HepG2 (cell line): ENCODE measurements at regions of chr14 and their contacts with region 1.

Region 1: DNA sequence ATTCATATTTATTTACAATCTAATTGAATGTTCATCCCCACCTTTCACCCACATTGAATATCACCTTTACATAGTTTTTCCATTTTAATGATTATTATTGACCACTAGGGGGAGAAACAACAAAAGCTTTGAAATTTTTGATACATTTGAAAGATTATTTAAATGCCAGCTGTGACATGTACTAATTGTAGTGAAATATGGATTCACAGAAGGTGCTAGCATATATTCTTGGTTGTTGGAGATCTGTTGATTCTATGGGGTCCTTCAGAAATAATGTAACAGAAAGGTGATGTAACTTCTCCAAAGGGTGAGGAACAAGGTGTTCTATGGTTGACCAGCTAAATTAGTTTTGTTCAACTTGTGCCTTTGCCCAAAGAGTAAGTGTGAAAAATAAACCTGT is 22.4 kb upstream of the GPR33 start:
- DNase-seq: peak; percentile 48
- ATAC-seq: no peak
- H3K4me3 ChIP-seq: no peak overlapping the region
- H3K27ac ChIP-seq: no peak overlapping the region
- H3K4me1 ChIP-seq: 0 out of 2 replicates have a peak, but pooled peaks cover 5% of the 10 kb centered on the region
- H3K27me3 ChIP-seq: peaks cover 0 to 10% of the 10 kb centered on the region in 2 experiments; a peak in 2 of 5 replicates
- CTCF ChIP-seq: peak; percentile 74
- EP300 ChIP-seq: no peak
- POLR2A ChIP-seq: no peak
- RAD21 ChIP-seq: peak; percentile 67

Region 2: GRCh38 chr14:31536201-31536960 is 26.2 kb after region 1 on chr14:
- CTCF ChIA-PET with region 1: no interaction called
- POLR2A ChIA-PET with region 1: no interaction called
- in situ Hi-C with region 1: no loop called
- intact Hi-C with region 1: no loop called
- DNase-seq: no peak
- ATAC-seq: no peak
- H3K4me3 ChIP-seq: no peak overlapping the region
- H3K27ac ChIP-seq: no peak overlapping the region
- H3K4me1 ChIP-seq: no peaks in the 10 kb centered on the region
- H3K27me3 ChIP-seq: no peaks in the 10 kb centered on the region; a peak in 2 of 5 replicates
- CTCF ChIP-seq: no peak
- EP300 ChIP-seq: no peak
- POLR2A ChIP-seq: no peak
- RAD21 ChIP-seq: no peak

Region 3: DNA sequence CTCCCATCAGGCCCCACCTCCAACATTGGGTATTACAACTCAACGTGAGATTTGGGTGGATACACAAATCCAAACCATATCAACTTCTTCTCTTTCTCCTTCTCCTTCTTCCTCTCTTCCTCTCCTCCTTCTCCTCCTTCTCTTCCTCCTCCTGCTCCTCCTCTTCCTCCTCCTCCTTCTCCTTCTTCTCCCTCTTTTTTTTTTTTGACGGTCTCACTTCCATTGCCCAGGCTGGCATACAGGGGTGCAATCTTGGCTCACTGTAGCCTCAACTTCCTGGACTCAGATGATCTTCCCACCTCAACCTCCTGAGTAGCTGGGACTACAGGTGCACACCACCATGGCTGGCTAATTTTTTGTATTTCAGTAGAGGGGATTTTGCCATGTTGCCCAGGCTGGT is 39.6 kb after region 1 on chr14:
- CTCF ChIA-PET with region 1: no interaction called
- POLR2A ChIA-PET with region 1: no interaction called
- in situ Hi-C with region 1: no loop called
- intact Hi-C with region 1: no loop called
- DNase-seq: no peak
- ATAC-seq: no peak
- H3K4me3 ChIP-seq: no peak overlapping the region
- H3K27ac ChIP-seq: no peak overlapping the region
- H3K4me1 ChIP-seq: peaks cover 19% of the 10 kb centered on the region
- H3K27me3 ChIP-seq: no peaks in the 10 kb centered on the region
- CTCF ChIP-seq: no peak
- EP300 ChIP-seq: no peak
- POLR2A ChIP-seq: no peak
- RAD21 ChIP-seq: no peak

Region 4: GRCh38 chr14:31561155-31561846 is 51.1 kb after region 1 on chr14 and contains the start of gene NUBPL:
- CTCF ChIA-PET with region 1: no interaction called
- POLR2A ChIA-PET with region 1: no interaction called
- in situ Hi-C with region 1: no loop called
- intact Hi-C with region 1: loop called (anchors 2 kb)
- DNase-seq: peak; percentile 97
- ATAC-seq: peak; percentile 95
- H3K4me3 ChIP-seq: peak within 1 kb of the TSS; percentile 84 to 93 (median 89)
- H3K27ac ChIP-seq: peak within 1 kb of the TSS; percentile 67
- H3K4me1 ChIP-seq: peaks cover 30% of the 10 kb centered on the region
- H3K27me3 ChIP-seq: no peaks in the 10 kb centered on the region; a peak in 1 of 5 replicates
- CTCF ChIP-seq: peak; percentile 43
- EP300 ChIP-seq: peak; percentile 80 to 91
- POLR2A ChIP-seq: peak; percentile 90 to 98
- RAD21 ChIP-seq: peak; percentile 73
- total RNA-seq, gene NUBPL: 44.1 and 67.1 TPM in 2 replicates

Region 5: GRCh38 chr14:31745741-31746140 is 235.5 kb after region 1 on chr14:
- CTCF ChIA-PET with region 1: interaction called, 4 read pairs
- POLR2A ChIA-PET with region 1: no interaction called
- in situ Hi-C with region 1: no loop called
- intact Hi-C with region 1: loop called (anchors 1 kb)
- DNase-seq: peak; percentile 42
- ATAC-seq: no peak
- H3K4me3 ChIP-seq: no peak overlapping the region
- H3K27ac ChIP-seq: no peak overlapping the region
- H3K4me1 ChIP-seq: peaks cover 17% of the 10 kb centered on the region
- H3K27me3 ChIP-seq: no peaks in the 10 kb centered on the region
- CTCF ChIP-seq: peak; percentile 22; the same call in 1 of the 2 replicates
- EP300 ChIP-seq: no peak
- POLR2A ChIP-seq: no peak
- RAD21 ChIP-seq: no peak

Region 6: GRCh38 chr14:31787381-31787780 is 277.2 kb after region 1 on chr14:
- CTCF ChIA-PET with region 1: interaction called, 8 read pairs
- POLR2A ChIA-PET with region 1: no interaction called
- in situ Hi-C with region 1: no loop called
- intact Hi-C with region 1: loop called (anchors 1 kb)
- DNase-seq: peak; percentile 72
- ATAC-seq: peak; percentile 93
- H3K4me3 ChIP-seq: no peak overlapping the region
- H3K27ac ChIP-seq: no peak overlapping the region
- H3K4me1 ChIP-seq: no peaks in the 10 kb centered on the region
- H3K27me3 ChIP-seq: no peaks in the 10 kb centered on the region
- CTCF ChIP-seq: peak; percentile 51
- EP300 ChIP-seq: no peak
- POLR2A ChIP-seq: no peak
- RAD21 ChIP-seq: no peak

Region 7: GRCh38 chr14:31895206-31895605 is 385.0 kb after region 1 on chr14:
- CTCF ChIA-PET with region 1: no interaction called
- POLR2A ChIA-PET with region 1: no interaction called
- in situ Hi-C with region 1: no loop called
- intact Hi-C with region 1: loop called (anchors 10 kb)
- DNase-seq: peak; percentile 35
- ATAC-seq: no peak
- H3K4me3 ChIP-seq: no peak overlapping the region
- H3K27ac ChIP-seq: no peak overlapping the region
- H3K4me1 ChIP-seq: peaks cover 16% of the 10 kb centered on the region; the same call in 1 of the 2 replicates
- H3K27me3 ChIP-seq: peaks cover 0 to 6% of the 10 kb centered on the region in 2 experiments; a peak in 1 of 5 replicates
- CTCF ChIP-seq: no peak
- EP300 ChIP-seq: no peak
- POLR2A ChIP-seq: no peak
- RAD21 ChIP-seq: no peak

Region 8: GRCh38 chr14:32469388-32470160 is 959.4 kb after region 1 on chr14:
- CTCF ChIA-PET with region 1: interaction called, 3 read pairs
- POLR2A ChIA-PET with region 1: no interaction called
- in situ Hi-C with region 1: loop called (anchors 10 kb)
- intact Hi-C with region 1: loop called (anchors 1 kb)
- DNase-seq: peak; percentile 63
- ATAC-seq: peak; percentile 60
- H3K4me3 ChIP-seq: no peak overlapping the region
- H3K27ac ChIP-seq: no peak overlapping the region
- H3K4me1 ChIP-seq: peaks cover 16% of the 10 kb centered on the region
- H3K27me3 ChIP-seq: no peaks in the 10 kb centered on the region
- CTCF ChIP-seq: peak; percentile 67
- EP300 ChIP-seq: no peak
- POLR2A ChIP-seq: no peak
- RAD21 ChIP-seq: no peak

Region 9: DNA sequence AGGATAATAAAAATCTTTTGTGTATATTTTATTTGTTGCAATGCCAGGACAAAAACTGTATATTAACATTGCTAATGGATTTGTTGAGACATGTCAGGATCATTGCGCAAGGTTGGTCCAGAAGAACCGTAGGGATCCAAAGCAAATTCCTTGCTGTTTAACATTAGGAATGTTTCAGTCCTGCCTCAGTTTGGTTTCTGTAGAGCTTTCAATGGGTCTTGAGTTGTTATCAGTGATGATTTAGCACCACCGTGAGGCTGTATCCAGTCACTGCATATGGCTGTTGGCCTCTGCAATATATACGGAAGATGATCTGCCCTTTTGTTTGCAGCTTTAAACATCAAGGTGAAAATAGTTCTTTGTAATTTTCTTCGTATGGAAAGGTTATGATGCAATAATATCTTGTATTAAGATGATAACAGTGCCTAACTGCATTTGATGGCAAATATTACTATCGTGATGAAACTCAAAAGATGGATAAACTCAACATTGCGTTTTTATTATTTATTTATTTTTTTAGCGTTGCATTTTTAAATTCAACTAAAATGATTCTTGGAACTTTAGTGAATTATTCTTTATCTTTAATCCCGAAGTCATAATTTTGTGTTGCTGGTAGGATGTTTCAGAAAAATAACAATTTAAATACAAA is 1050.1 kb after region 1 on chr14:
- CTCF ChIA-PET with region 1: interaction called, 6 read pairs
- POLR2A ChIA-PET with region 1: no interaction called
- in situ Hi-C with region 1: no loop called
- intact Hi-C with region 1: loop called (anchors 2 kb)
- DNase-seq: peak; percentile 82
- ATAC-seq: peak; percentile 98
- H3K4me3 ChIP-seq: no peak overlapping the region
- H3K27ac ChIP-seq: no peak overlapping the region
- H3K4me1 ChIP-seq: no peaks in the 10 kb centered on the region
- H3K27me3 ChIP-seq: no peaks in the 10 kb centered on the region
- CTCF ChIP-seq: peak; percentile 98
- EP300 ChIP-seq: no peak
- POLR2A ChIP-seq: no peak
- RAD21 ChIP-seq: peak; percentile 87